Mammary epithelial cell (primary cell): ENCODE measurements at regions of chrX and their contacts with region 1.

Region 1: DNA sequence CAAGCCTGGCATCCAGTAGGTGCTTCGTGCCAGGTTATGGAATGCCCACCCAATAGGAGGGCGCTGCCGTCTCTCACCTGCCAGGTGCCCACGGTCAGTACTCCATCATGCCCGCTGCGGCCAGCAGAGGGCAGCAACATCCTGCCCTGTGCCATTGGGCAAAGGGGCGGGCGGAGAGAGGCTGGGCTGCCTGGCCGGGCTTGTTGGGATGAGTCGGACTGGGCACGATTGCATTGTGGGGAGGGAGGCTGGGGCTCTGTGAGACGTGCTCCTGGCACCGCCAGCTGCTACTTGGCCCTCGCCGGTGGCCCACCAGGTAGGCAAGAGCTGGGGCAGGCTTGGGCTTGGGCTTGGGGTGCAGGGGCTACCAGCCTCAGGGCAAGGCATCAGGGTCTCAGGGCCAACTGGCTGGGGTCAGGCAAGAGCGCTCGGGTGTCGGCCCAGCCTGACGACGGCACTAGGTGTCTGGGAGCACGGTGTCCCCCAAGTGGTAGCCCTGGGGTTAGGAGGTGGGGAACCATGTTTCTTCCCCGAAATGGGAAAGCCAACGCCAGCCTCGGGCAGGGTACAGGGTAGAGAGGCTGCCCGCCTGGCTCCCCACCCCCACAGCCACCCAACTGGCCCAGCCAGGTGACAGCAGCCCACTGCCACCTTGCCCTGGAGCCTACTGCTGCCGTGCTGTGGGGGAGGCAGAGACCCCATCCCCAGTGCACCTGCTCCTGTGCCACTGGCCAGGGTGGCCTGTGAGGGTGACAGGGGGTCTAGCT is at the start of gene PLXNB3:
- DNase-seq: peak; percentile 76
- H3K4me3 ChIP-seq: peak within 1 kb of the TSS; percentile 25 to 68 (median 66)
- H3K27ac ChIP-seq: no peak within 1 kb of the TSS
- H3K4me1 ChIP-seq: peaks cover 30% of the 10 kb centered on the region
- H3K27me3 ChIP-seq: no peaks in the 10 kb centered on the region
- CTCF ChIP-seq: peak; percentile 72 to 86
- total RNA-seq, gene PLXNB3: 15.2 to 24.6 TPM

Region 2: DNA sequence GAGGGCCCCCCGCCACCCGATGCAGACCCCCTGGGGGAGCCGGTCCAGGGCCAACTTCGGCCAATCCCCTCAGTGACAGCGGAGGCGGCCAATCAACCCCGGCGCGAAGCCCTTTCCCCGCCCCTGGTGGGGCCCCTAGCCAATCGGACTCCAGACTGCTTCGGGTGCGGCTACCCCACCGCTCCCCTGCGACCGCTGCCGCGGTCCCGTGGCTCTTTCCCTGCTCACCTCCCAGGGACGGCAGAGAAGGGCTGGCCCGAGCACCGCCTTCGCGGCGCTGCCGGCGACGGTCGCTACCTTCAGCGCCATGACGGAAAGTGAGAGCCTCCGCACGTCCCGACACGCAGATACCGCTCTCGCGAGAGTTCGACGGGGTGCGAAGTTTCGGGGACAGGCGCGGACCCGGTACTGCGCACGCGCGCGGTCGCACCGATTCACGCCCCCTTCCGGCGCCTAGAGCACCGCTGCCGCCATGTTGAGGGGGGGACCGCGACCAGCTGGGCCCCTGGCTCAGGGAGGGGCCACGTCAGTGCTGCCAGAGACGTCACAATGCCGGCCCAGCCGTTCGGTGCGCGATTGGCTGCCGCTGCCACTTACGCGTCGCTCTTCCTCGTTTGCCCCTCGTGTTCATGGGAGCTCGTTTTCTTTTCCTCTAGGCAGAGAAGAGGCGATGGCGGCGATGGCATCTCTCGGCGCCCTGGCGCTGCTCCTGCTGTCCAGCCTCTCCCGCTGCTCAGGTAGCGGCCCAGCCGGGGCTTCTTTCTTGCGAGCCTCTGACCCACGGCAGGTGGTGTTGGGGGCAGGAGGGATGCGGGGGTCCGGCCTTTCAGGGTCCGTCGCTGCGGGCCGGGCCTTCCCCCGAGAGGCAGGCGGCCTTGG is 30.1 kb after region 1 on chrX and contains the starts of genes IDH3G and SSR4:
- CTCF ChIA-PET with region 1: no interaction called
- dilution Hi-C with region 1: no loop called
- in situ Hi-C with region 1: no loop called
- intact Hi-C with region 1: loop called (anchors 1 kb)
- DNase-seq: peak; percentile 88
- H3K4me3 ChIP-seq: peak within 1 kb of the TSS; percentile 49 to 87 (median 74)
- H3K27ac ChIP-seq: peak within 1 kb of the TSS; percentile 89
- H3K4me1 ChIP-seq: peaks cover 16% of the 10 kb centered on the region
- H3K27me3 ChIP-seq: no peaks in the 10 kb centered on the region
- CTCF ChIP-seq: no peak
- total RNA-seq, gene IDH3G: 40.5 to 54.9 TPM
- total RNA-seq, gene SSR4: 104 to 173 TPM

Region 3: GRCh38 chrX:153885968-153886903 is 122.1 kb after region 1 on chrX and contains the start of gene L1CAM:
- CTCF ChIA-PET with region 1: no interaction called
- dilution Hi-C with region 1: no loop called
- in situ Hi-C with region 1: no loop called
- intact Hi-C with region 1: loop called (anchors 1 kb)
- DNase-seq: no peak
- H3K4me3 ChIP-seq: peak within 1 kb of the TSS; percentile 12 to 59 (median 42)
- H3K27ac ChIP-seq: no peak within 1 kb of the TSS
- H3K4me1 ChIP-seq: peaks cover 31% of the 10 kb centered on the region
- H3K27me3 ChIP-seq: no peaks in the 10 kb centered on the region
- CTCF ChIP-seq: no peak
- total RNA-seq, gene L1CAM: 46.2 to 96.4 TPM

Region 4: DNA sequence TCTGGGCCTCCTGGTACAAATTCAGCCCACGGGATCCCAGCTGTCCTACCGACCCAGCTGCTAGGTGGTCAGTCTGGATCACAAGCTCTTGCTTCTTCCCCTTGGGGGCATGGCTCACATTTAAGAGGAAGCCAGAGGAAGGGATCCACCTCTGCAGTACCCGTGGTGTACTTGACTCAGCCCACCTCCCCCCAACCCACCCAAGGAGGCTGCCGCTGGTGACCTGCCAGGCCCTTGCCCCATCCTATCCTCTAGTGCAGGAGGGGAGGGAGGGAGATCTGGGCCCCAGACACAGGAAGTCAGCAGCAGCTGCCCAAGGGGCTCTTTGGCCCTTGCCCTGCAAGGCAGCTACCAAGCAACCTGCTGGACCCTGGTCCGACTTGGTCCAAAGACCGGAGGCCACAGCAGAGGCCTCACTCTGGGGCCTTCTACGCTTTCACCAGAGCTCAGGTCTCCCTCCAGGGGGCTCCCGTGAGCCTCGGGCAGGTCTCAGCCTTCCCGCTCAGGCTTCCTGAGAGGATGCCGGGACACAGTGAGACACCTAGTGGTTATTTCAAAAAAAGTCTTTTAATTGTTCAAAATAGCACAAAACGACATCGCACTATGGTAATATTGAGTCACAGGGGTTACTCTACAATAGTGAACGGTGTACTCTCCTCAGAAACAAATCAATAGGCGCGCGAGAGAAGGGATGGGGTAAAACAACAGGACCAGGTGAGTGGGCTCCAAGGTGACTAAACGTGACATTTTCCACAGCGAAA is 183.0 kb after region 1 on chrX:
- CTCF ChIA-PET with region 1: interaction called, 3 read pairs
- dilution Hi-C with region 1: no loop called
- in situ Hi-C with region 1: loop called in 1 of 2 experiments (anchors 25 kb)
- intact Hi-C with region 1: loop called (anchors 1 kb)
- DNase-seq: peak; percentile 61
- H3K4me3 ChIP-seq: no peak overlapping the region
- H3K27ac ChIP-seq: no peak overlapping the region
- H3K4me1 ChIP-seq: no peaks in the 10 kb centered on the region
- H3K27me3 ChIP-seq: no peaks in the 10 kb centered on the region
- CTCF ChIP-seq: peak; percentile 71 to 85

Region 5: GRCh38 chrX:153953342-153953830 is 189.2 kb after region 1 on chrX:
- CTCF ChIA-PET with region 1: no interaction called
- dilution Hi-C with region 1: no loop called
- in situ Hi-C with region 1: loop called in 1 of 2 experiments (anchors 25 kb)
- intact Hi-C with region 1: loop called (anchors 1 kb)
- DNase-seq: peak; percentile 34
- H3K4me3 ChIP-seq: no peak overlapping the region
- H3K27ac ChIP-seq: no peak overlapping the region
- H3K4me1 ChIP-seq: no peaks in the 10 kb centered on the region
- H3K27me3 ChIP-seq: no peaks in the 10 kb centered on the region
- CTCF ChIP-seq: peak; percentile 65 to 89

Region 6: DNA sequence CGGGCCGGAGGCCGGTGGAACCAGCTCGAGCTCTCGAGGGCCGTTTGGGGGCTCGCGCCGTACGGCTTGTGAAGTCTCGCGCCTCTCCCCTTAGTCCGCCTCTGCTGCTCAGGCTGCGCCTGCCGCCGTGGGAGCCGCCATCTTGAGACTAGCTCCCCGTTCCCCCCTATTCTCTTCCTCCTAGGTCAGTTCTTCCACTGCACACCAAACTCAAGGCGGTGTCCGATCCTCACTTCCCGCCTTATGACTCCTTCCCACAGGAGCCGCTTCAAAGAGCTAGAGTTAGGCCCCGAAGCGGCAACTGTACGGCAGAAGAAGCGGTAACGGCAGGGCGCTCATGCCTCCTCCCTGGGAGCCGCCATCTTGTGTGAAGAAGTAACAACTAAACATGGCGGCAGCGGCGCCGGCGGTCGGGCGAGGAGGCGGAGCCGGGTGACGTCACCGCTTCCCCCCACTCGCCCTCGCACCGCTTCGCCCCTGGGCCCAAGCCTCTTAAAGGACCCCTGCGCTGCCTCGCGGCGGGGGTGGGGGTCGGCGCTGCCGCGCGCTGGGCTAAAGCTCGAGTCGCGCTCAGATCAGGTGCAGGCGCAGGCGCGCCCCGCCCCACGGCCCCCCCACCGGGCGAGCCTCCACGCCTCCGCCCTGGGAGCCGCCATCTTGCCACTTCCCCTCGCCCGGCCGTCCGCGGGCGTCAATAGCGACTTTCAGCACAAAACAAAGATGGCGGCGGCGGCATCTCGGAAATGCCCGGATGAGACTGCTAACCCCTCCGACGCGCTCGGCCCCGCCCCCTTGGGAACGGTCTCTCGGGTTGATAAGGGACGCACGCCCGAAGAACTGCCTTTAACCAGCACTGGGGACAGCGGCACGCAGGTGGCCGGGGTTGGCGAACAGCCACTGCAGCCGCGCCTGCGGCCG is 207.5 kb after region 1 on chrX and contains the start of gene HCFC1:
- CTCF ChIA-PET with region 1: no interaction called
- dilution Hi-C with region 1: no loop called
- in situ Hi-C with region 1: loop called in 1 of 2 experiments (anchors 25 kb)
- intact Hi-C with region 1: no loop called
- DNase-seq: peak; percentile 93
- H3K4me3 ChIP-seq: peak within 1 kb of the TSS; percentile 57 to 85 (median 72)
- H3K27ac ChIP-seq: peak within 1 kb of the TSS; percentile 97
- H3K4me1 ChIP-seq: peaks cover 19% of the 10 kb centered on the region
- H3K27me3 ChIP-seq: no peaks in the 10 kb centered on the region
- CTCF ChIP-seq: no peak
- total RNA-seq, gene HCFC1: 21.8 to 47.6 TPM

Region 7: GRCh38 chrX:154051201-154051810 is 287.1 kb after region 1 on chrX:
- CTCF ChIA-PET with region 1: no interaction called
- dilution Hi-C with region 1: no loop called
- in situ Hi-C with region 1: no loop called
- intact Hi-C with region 1: loop called (anchors 1 kb)
- DNase-seq: peak; percentile 35
- H3K4me3 ChIP-seq: no peak overlapping the region
- H3K27ac ChIP-seq: no peak overlapping the region
- H3K4me1 ChIP-seq: no peaks in the 10 kb centered on the region
- H3K27me3 ChIP-seq: no peaks in the 10 kb centered on the region
- CTCF ChIP-seq: peak; percentile 67 to 73